PC-3 (cell line): ENCODE measurements at regions of chr19 and their contacts with region 1.

Region 1: DNA sequence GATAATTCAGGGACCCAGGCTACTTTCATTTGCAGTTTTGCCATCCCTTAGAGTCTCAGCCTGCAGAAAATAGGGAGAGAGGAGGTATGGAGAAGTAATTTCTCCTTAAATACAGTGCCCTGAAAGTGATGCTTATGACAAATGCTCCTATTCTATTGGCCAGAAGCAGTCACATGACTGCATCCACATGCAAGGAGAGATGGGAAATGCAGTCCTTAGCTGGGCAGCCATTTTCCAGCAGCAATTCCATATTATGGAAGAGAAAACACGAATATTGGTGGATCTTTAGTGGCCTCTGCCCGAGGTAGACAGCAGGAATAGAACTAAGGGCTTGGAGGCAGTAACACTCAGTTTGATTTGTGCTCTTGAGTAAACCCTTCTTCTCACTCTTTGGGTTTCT is 39.4 kb downstream of the VAV1 start:
- DNase-seq: peak; percentile 77
- ATAC-seq: peak; percentile 67
- H3K4me3 ChIP-seq: no peak overlapping the region
- H3K27ac ChIP-seq: no peak overlapping the region
- H3K4me1 ChIP-seq: no peaks in the 10 kb centered on the region
- H3K27me3 ChIP-seq: 0 out of 2 replicates have a peak, but pooled peaks cover 6% of the 10 kb centered on the region
- CTCF ChIP-seq: no peak

Region 2: DNA sequence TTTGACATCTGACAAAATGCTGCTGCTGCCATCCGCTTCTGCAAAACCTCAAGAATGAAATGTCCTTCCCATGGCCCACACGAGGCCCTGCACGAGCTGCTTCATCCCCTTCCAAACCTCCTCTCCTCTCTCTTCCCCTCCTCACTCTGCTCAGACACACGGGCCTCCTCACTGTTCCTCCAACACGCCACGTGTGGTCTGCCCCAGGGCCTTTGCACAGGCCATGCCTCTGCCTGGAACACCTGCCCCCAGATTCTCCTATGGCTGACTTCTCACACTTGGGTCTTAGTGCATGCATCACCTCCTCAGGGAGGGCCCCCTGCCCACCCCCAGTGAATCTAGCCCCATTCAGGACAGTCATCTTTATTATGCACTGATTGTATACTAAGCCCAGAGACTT is 991.1 kb before region 1 on chr19:
- CTCF ChIA-PET with region 1: interaction called, 12 read pairs
- POLR2A ChIA-PET with region 1: no interaction called
- intact Hi-C with region 1: no loop called
- DNase-seq: no peak
- ATAC-seq: no peak
- H3K4me3 ChIP-seq: no peak overlapping the region
- H3K27ac ChIP-seq: no peak overlapping the region
- H3K4me1 ChIP-seq: no peaks in the 10 kb centered on the region
- H3K27me3 ChIP-seq: no peaks in the 10 kb centered on the region
- CTCF ChIP-seq: no peak